Activated naive CD8-positive, alpha-beta T cell treated with anti-CD3 and anti-CD28 coated beads, Interleukin-2, amount 10 ng/mL, durations not matched to agents 7 days and 5 days (primary cell): ENCODE measurements at regions of chr3 and their contacts with region 1.

Region 1: GRCh38 chr3:138174421-138175122 is at the start of gene DBR1:
- DNase-seq: peak; percentile 80
- ATAC-seq: peak; percentile 94
- H3K4me3 Mint-ChIP-seq: peak within 1 kb of the TSS; percentile 93
- H3K27ac Mint-ChIP-seq: peak within 1 kb of the TSS; percentile 93
- H3K4me1 Mint-ChIP-seq: peaks cover 25% of the 10 kb centered on the region
- H3K27me3 Mint-ChIP-seq: no peaks in the 10 kb centered on the region
- total RNA-seq, gene DBR1: 22.6 to 25.7 TPM

Region 2: DNA sequence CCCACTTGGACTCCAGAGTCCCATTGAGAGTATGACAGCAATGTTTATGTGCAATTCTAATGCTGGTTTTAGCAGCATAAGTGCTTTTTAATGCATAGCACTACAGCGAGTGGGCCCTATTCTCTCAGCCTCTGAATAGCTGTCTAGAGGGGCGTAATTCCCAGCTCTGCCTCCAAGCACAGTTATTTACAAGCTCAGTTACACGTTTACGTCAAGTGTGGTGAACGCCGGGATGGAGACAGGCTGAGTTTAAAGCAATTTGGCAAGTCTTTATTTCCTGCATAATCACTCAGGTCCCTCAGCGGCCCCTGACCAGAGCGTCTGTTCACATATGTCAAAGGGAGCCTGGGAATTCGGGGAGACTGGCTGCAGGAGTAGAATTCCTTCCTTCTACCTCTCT is 366.6 kb before region 1 on chr3:
- POLR2A ChIA-PET with region 1: no interaction called
- DNase-seq: no peak
- ATAC-seq: no peak
- H3K4me3 Mint-ChIP-seq: no peak overlapping the region
- H3K27ac Mint-ChIP-seq: no peak overlapping the region
- H3K4me1 Mint-ChIP-seq: no peaks in the 10 kb centered on the region
- H3K27me3 Mint-ChIP-seq: peaks cover 2% of the 10 kb centered on the region

Region 3: DNA sequence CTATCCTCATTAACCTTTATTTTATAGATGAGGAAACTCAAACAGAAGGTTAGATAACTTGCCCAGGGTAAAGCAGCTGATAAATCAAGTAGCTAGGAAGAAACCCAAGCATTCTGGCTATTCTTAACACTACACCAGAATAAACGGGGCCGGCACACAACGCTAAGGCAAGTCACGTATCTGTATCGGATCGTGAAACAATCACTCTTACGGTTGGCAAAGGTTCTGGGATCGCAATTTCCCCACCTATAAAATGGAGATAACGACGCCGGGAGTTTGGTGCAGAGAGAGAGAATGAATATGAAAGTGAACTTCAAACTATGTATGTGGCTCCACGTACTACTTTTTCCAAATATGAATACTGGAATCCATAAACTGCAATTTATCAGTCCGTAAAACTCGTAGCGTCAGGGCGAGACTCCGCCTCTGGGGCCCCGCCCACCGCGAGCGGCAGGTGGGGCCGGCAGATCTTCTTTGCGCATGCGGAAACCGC is 12.3 kb after region 1 on chr3:
- POLR2A ChIA-PET with region 1: interaction called, 24 read pairs
- DNase-seq: peak; percentile 91
- ATAC-seq: peak; percentile 44
- H3K4me3 Mint-ChIP-seq: peak overlapping the region; percentile 96
- H3K27ac Mint-ChIP-seq: peak overlapping the region; percentile 98
- H3K4me1 Mint-ChIP-seq: peaks cover 33% of the 10 kb centered on the region
- H3K27me3 Mint-ChIP-seq: peaks cover 18% of the 10 kb centered on the region

Region 4: GRCh38 chr3:138915503-138916498 is 741.2 kb after region 1 on chr3:
- POLR2A ChIA-PET with region 1: interaction called, 11 read pairs
- DNase-seq: peak; percentile 91
- ATAC-seq: peak; percentile 86
- H3K4me3 Mint-ChIP-seq: peak overlapping the region; percentile 84
- H3K27ac Mint-ChIP-seq: peak overlapping the region; percentile 80
- H3K4me1 Mint-ChIP-seq: peaks cover 4% of the 10 kb centered on the region
- H3K27me3 Mint-ChIP-seq: peaks cover 39% of the 10 kb centered on the region